MCF 10A (cell line): ENCODE measurements at regions of chr1 and their contacts with region 1.

Region 1: GRCh38 chr1:117895482-117896114 is 33.8 kb downstream of the GDAP2 start:
- DNase-seq: peak; percentile 78
- H3K4me3 Mint-ChIP-seq: no peak overlapping the region
- H3K27ac Mint-ChIP-seq: no peak overlapping the region
- H3K4me1 Mint-ChIP-seq: no peaks in the 10 kb centered on the region
- H3K27me3 Mint-ChIP-seq: no peaks in the 10 kb centered on the region
- CTCF ChIP-seq: peak; percentile 69

Region 2: GRCh38 chr1:117367047-117368018 is 528.3 kb before region 1 on chr1 and contains the start of gene MAN1A2:
- CTCF ChIA-PET with region 1: interaction called, 4 read pairs
- POLR2A ChIA-PET with region 1: no interaction called
- intact Hi-C with region 1: loop called (anchors 5 kb)
- DNase-seq: peak; percentile 84
- H3K4me3 Mint-ChIP-seq: peak within 1 kb of the TSS; percentile 91
- H3K27ac Mint-ChIP-seq: peak within 1 kb of the TSS; percentile 83
- H3K4me1 Mint-ChIP-seq: peaks cover 25% of the 10 kb centered on the region
- H3K27me3 Mint-ChIP-seq: no peaks in the 10 kb centered on the region
- CTCF ChIP-seq: no peak
- total RNA-seq, gene MAN1A2: 32.0 and 33.4 TPM in 2 replicates

Region 3: GRCh38 chr1:117534995-117535467 is 360.6 kb before region 1 on chr1:
- CTCF ChIA-PET with region 1: interaction called, 20 read pairs
- POLR2A ChIA-PET with region 1: no interaction called
- intact Hi-C with region 1: loop called (anchors 1 kb)
- DNase-seq: peak; percentile 62
- H3K4me3 Mint-ChIP-seq: no peak overlapping the region
- H3K27ac Mint-ChIP-seq: no peak overlapping the region
- H3K4me1 Mint-ChIP-seq: no peaks in the 10 kb centered on the region
- H3K27me3 Mint-ChIP-seq: no peaks in the 10 kb centered on the region
- CTCF ChIP-seq: peak; percentile 53

Region 4: DNA sequence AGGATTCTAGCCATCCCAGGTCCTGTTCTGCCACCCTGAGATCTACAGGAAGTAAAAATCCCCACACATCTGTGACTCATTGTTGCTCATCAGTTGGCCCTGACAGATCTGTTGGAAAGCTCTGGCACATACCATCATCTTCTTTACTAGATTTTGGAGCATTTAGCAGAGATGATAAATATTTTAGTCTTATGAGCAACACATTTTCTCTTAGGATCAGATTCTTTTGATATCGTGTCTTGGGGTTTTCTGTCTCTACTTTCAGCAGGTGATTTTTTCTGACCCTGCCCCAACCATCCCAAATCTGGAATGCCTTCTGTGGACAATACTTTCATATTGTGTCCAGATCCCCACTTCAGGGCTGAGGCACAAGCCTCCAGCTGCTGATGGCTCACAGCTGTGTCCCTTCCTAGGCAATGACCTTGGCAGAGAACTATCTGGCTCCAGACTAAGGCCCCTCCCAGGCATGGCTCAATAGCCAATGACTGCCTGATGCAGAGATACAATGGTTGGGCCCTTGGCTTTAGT is 69.0 kb before region 1 on chr1:
- CTCF ChIA-PET with region 1: interaction called, 10 read pairs
- POLR2A ChIA-PET with region 1: no interaction called
- intact Hi-C with region 1: loop called (anchors 5 kb)
- DNase-seq: peak; percentile 88
- H3K4me3 Mint-ChIP-seq: no peak overlapping the region
- H3K27ac Mint-ChIP-seq: peak overlapping the region; percentile 17
- H3K4me1 Mint-ChIP-seq: peaks cover 36% of the 10 kb centered on the region
- H3K27me3 Mint-ChIP-seq: no peaks in the 10 kb centered on the region
- CTCF ChIP-seq: no peak

Region 5: DNA sequence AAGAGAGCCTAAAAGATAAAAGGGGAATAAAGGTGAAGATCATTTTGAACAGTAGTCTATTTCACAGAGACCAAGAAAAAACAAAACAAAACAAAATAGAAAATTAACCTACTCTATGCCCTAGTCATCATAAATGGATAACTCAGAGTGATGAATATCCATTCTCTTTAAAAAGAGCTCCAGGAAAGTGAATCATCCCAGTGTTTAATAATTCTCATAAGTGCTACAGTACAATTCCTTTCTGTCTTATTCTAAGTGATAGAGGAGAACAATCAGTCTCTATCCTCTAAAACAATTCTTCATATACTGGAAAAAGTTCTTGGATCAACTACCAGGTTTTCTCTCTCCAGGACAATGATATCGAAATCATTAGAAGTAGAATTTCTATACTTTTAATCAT is 12.0 kb before region 1 on chr1:
- CTCF ChIA-PET with region 1: interaction called, 39 read pairs
- POLR2A ChIA-PET with region 1: interaction called, 3 read pairs
- intact Hi-C with region 1: no loop called
- DNase-seq: no peak
- H3K4me3 Mint-ChIP-seq: no peak overlapping the region
- H3K27ac Mint-ChIP-seq: no peak overlapping the region
- H3K4me1 Mint-ChIP-seq: peaks cover 6% of the 10 kb centered on the region
- H3K27me3 Mint-ChIP-seq: no peaks in the 10 kb centered on the region
- CTCF ChIP-seq: no peak